ENCODE measurements at regions of chr7 and their contacts with region 1.

Region 1: GRCh38 chr7:31122649-31123058 is 70.5 kb downstream of the ADCYAP1R1 start:
- DNase-seq: peak; percentile 46
- H3K4me3 ChIP-seq: no peak overlapping the region
- H3K27me3 ChIP-seq: peaks cover 2% of the 10 kb centered on the region; the same call in 1 of the 2 replicates
- CTCF ChIP-seq: peak; percentile 83

Region 2: GRCh38 chr7:30800785-30801252 is 321.8 kb before region 1 on chr7:
- CTCF ChIA-PET with region 1: interaction called, 29 read pairs
- POLR2A ChIA-PET with region 1: no interaction called
- DNase-seq: no peak
- H3K4me3 ChIP-seq: no peak overlapping the region
- H3K27me3 ChIP-seq: peaks cover 1% of the 10 kb centered on the region; the same call in 1 of the 2 replicates
- CTCF ChIP-seq: peak; percentile 69

Region 3: DNA sequence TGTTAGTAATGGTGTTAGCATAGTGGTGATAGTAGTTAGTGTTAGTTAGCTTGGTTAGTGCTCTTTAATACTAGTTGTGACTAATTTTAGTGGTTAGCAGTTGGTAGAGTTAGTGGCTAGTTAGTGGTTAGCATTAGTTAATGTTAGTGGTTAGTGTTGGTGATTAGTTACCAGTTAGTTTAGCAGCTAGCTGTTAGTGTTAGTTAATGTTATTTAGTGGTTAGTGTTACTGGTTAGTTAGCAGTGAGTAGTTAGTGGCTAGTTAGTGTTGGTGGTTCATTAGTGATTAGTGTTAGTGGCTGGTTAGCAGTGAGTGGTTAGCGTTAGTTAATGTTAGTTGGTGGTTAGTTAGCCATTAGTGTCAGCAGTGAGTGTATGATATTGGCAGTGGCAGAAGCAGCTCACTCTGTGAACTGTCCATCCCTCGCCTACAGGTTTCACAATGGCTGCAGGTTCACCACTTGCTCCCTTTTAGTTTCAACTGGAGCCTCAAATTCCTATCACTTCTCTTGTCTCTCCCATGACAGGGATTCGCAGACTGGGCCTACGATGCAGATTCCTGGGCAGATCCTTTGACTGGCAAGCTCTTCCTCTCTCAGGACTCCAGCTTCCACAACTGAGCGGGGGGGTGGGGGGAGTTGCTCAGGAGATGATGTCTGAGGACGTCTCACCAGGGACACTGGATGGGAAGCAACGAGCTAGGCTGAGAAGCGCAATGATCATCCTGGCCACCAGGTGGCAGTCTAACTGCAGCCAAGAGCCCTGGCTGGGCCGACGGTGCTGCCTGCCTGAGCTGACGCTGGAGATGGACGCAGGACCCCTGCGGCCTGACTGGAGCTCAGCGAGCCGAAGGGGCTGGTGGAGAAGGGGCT is 139.4 kb before region 1 on chr7:
- CTCF ChIA-PET with region 1: interaction called, 255 read pairs
- POLR2A ChIA-PET with region 1: no interaction called
- DNase-seq: no peak
- H3K4me3 ChIP-seq: no peak overlapping the region
- H3K27me3 ChIP-seq: peaks cover 6% of the 10 kb centered on the region
- CTCF ChIP-seq: peak; percentile 95

Region 4: DNA sequence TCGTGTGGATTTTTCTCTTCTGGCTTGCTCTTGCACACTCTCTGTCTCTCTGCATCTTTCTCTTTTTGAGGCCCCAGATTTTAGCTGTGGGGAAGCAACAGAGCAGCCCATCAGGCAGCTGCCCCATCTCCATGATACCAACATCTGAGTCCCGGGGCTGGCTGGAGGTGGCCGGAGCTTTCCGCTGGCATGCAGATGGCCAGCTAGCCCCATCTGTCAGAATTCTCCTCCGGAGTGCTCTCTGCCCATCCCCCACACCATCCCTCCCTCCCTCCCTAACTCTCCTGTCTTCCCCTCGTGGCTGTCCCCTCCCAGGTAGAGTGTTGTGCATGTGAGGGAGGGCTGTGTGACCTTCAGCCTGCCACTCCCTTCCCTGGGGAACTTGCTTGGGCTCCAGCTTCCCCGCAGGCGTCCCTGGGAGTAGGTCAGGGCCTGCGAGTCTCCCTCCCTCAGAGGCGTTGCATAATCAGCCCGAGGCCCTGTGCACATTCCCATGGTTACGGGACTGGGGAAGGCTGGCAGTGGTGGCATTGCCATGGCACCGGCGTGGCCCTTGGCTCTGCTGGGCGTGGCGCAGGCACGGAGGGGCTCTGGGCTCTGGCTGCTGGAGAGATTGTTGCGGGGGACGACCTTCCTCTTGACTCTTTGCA is 134.2 kb before region 1 on chr7:
- CTCF ChIA-PET with region 1: interaction called, 255 read pairs
- POLR2A ChIA-PET with region 1: no interaction called
- DNase-seq: no peak
- H3K4me3 ChIP-seq: no peak overlapping the region
- H3K27me3 ChIP-seq: no peaks in the 10 kb centered on the region; the same call in 1 of the 2 replicates
- CTCF ChIP-seq: no peak

Region 5: DNA sequence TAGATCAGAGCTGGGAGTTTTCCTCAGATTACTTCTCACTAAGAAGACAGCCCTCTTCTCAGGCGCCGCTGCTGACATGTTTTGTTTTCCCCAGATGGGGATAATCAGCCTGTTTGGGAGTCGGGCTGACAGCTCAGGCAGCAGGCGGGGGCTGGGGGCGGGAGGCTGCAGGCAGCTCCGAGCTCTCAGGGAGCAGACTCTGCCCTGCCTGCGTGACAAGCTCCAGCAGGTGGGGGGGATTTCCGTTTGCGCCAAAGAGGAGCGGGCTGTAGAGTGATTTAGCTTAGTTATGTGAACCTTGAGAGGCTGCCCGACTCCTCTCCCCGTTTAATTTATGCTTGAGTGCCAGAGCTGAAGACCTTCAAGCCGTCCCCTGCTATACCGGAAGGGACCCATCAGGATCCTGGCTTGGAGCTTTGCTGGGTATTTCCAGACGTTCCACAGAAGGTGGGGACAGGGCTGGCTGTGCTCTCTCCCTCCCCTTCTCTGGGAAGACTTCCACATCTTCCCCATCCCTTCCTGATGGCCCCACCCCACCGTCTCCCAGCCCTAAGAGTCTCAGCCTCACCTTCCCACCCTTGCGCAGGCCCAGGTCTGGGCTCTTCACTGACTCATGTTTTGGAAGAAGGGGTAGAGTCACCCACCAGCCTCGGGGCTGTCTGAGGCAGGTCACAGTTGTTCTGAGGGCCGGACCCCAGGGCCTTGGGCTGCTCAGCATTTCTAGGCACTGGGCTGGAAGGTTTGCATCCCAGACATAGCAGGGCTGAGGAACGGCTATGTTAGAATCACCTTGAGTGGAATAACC is 95.3 kb before region 1 on chr7:
- CTCF ChIA-PET with region 1: interaction called, 14 read pairs
- POLR2A ChIA-PET with region 1: no interaction called
- DNase-seq: no peak
- H3K4me3 ChIP-seq: no peak overlapping the region
- H3K27me3 ChIP-seq: peaks cover 4% of the 10 kb centered on the region; the same call in 1 of the 2 replicates
- CTCF ChIP-seq: no peak

Region 6: DNA sequence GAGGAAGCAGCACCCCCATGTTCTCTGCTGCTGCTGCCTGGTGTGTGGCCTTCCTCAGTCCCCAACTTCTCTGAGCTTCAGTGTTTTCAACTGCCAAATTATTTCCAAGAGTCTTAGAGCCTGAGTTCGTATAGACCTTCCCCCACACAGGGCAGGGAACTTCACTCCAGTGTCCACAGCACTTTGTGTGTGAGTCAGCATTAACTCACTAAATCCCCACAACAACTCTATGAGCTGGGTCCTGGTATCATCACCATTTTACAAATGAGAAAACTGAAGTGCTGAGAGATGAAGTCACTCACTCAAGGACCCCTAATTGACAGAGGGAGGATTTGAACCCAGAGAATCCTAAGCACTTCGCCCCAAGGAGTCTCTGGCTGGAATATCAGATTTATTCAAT is 22.2 kb before region 1 on chr7:
- CTCF ChIA-PET with region 1: interaction called, 16 read pairs
- POLR2A ChIA-PET with region 1: no interaction called
- DNase-seq: no peak
- H3K4me3 ChIP-seq: no peak overlapping the region
- H3K27me3 ChIP-seq: no peaks in the 10 kb centered on the region
- CTCF ChIP-seq: no peak

Region 7: GRCh38 chr7:31134246-31135188 is 11.9 kb after region 1 on chr7:
- CTCF ChIA-PET with region 1: interaction called, 79 read pairs
- POLR2A ChIA-PET with region 1: no interaction called
- DNase-seq: peak; percentile 5
- H3K4me3 ChIP-seq: no peak overlapping the region
- H3K27me3 ChIP-seq: no peaks in the 10 kb centered on the region
- CTCF ChIP-seq: peak; percentile 77